Endothelial cell of umbilical vein (primary cell): ENCODE measurements at regions of chr9 and their contacts with region 1.

Region 1: GRCh38 chr9:130712564-130713285 is 19.1 kb downstream of the EXOSC2 start:
- DNase-seq: peak; percentile 98
- H3K4me3 ChIP-seq: peak overlapping the region; percentile 78 to 97 (median 81)
- H3K27ac ChIP-seq: peak overlapping the region; percentile 81
- H3K4me1 ChIP-seq: peaks cover 12% of the 10 kb centered on the region
- H3K27me3 ChIP-seq: no peaks in the 10 kb centered on the region
- CTCF ChIP-seq: no peak
- POLR2A ChIP-seq: peak; percentile 85

Region 2: DNA sequence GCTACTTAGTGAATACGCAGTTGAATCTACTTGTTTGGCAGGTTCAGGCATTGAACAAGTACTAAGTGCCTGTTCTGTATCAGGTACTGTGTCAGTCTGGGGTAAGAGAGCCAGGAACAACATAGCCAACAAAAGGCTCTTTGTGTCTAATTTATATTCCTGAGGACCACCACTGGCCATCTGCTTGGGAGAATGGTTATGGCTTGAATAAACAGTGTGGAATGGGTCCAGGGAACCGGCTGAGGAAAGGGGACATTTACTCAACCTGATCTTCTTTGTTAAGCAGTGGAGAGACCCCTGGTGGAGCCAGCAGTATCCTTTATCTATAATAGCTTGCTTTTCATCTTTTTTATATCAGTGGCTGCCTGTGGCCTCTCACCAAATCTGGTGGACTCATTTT is 19.4 kb after region 1 on chr9:
- CTCF ChIA-PET with region 1: interaction called, 19 read pairs
- POLR2A ChIA-PET with region 1: interaction called, 6 read pairs
- dilution Hi-C with region 1: no loop called
- intact Hi-C with region 1: loop called (anchors 2 kb)
- DNase-seq: peak; percentile 32
- H3K4me3 ChIP-seq: no peak overlapping the region
- H3K27ac ChIP-seq: no peak overlapping the region
- H3K4me1 ChIP-seq: peaks cover 30% of the 10 kb centered on the region
- H3K27me3 ChIP-seq: no peaks in the 10 kb centered on the region
- CTCF ChIP-seq: peak in 1 of 2 donors; percentile 23
- POLR2A ChIP-seq: no peak

Region 3: GRCh38 chr9:130765137-130766020 is 52.7 kb after region 1 on chr9:
- CTCF ChIA-PET with region 1: interaction called, 4 read pairs
- POLR2A ChIA-PET with region 1: no interaction called
- dilution Hi-C with region 1: no loop called
- intact Hi-C with region 1: loop called (anchors 1 kb)
- DNase-seq: peak; percentile 84
- H3K4me3 ChIP-seq: peak overlapping the region in 1 of 3 experiments; percentile 20
- H3K27ac ChIP-seq: peak overlapping the region; percentile 97
- H3K4me1 ChIP-seq: peaks cover 46% of the 10 kb centered on the region
- H3K27me3 ChIP-seq: no peaks in the 10 kb centered on the region
- CTCF ChIP-seq: no peak
- POLR2A ChIP-seq: no peak

Region 4: GRCh38 chr9:130847327-130848217 is 134.8 kb after region 1 on chr9:
- CTCF ChIA-PET with region 1: interaction called, 5 read pairs
- POLR2A ChIA-PET with region 1: no interaction called
- dilution Hi-C with region 1: no loop called
- intact Hi-C with region 1: loop called (anchors 1 kb)
- DNase-seq: peak; percentile 96
- H3K4me3 ChIP-seq: peak overlapping the region in 1 of 3 experiments; percentile 56
- H3K27ac ChIP-seq: peak overlapping the region; percentile 95
- H3K4me1 ChIP-seq: peaks cover 58% of the 10 kb centered on the region
- H3K27me3 ChIP-seq: no peaks in the 10 kb centered on the region
- CTCF ChIP-seq: peak in 1 of 2 donors; percentile 4
- POLR2A ChIP-seq: peak; percentile 55